Natural killer cell (primary cell): ENCODE measurements at regions of chr5 and their contacts with region 1.

Region 1: GRCh38 chr5:93607367-93608258 is 24.6 kb downstream of the NR2F1 start:
- DNase-seq: peak in 1 of 2 donors; percentile 73
- ATAC-seq: peak; percentile 75 to 80 (median 76)
- H3K4me3 ChIP-seq: no peak overlapping the region
- H3K4me3 Mint-ChIP-seq: no peak overlapping the region
- H3K27ac ChIP-seq: no peak overlapping the region
- H3K27ac Mint-ChIP-seq: no peak overlapping the region
- H3K4me1 ChIP-seq: peaks cover 7% of the 10 kb centered on the region
- H3K4me1 Mint-ChIP-seq: peaks cover 12 to 26% of the 10 kb centered on the region in 2 donors
- H3K27me3 ChIP-seq: peaks cover 88% of the 10 kb centered on the region
- H3K27me3 Mint-ChIP-seq: peaks cover 70 to 83% of the 10 kb centered on the region in 2 donors
- CTCF ChIP-seq: peak; percentile 43

Region 2: DNA sequence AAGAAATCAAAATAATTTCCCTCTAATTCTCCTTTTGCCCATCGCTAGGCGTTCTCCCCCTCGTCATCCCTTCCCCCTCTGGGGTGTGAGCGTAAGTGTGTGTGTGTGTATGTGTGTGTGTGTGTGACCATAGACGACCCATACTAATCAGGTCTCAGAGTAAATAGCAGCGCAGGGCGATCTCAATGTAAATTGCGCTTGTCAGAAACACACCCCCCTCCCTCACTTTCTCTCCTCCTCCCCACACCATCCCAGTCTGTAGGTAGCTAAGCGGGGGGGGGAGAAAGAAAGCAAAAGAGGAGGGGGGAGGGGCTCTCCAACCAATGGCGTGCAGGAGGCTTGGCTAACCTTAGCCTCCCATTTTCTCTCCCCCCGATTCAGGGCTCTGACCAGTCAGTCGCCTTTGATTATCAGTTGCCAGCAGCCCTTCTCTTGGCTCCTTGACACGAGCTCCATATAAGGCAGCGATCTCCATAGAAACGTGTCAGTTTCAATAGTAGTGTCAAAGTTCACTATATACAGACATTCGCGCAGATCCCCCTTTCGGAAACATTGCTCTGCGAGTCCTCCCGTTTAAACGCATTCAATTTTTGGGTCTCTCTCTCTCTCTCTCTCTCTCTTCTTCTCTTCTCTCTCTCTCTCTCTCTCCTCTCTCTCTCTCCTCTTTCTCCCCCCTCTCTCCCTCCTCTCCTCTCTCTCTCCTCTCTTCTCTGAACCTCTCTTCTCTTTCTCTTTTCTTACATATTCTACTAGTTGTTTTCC is 24.8 kb before region 1 on chr5 and contains the start of gene NR2F1:
- intact Hi-C with region 1: loop called (anchors 2 kb)
- DNase-seq: peak in 1 of 2 donors; percentile 46
- ATAC-seq: no peak
- H3K4me3 ChIP-seq: no peak within 1 kb of the TSS
- H3K4me3 Mint-ChIP-seq: no peak within 1 kb of the TSS
- H3K27ac ChIP-seq: no peak within 1 kb of the TSS
- H3K27ac Mint-ChIP-seq: no peak within 1 kb of the TSS
- H3K4me1 ChIP-seq: peaks cover 64% of the 10 kb centered on the region
- H3K4me1 Mint-ChIP-seq: peaks cover 35% of the 10 kb centered on the region in 2 donors
- H3K27me3 ChIP-seq: peaks cover 74% of the 10 kb centered on the region
- H3K27me3 Mint-ChIP-seq: peaks cover 37 to 42% of the 10 kb centered on the region in 2 donors
- CTCF ChIP-seq: no peak
- total RNA-seq, gene NR2F1: not detected

Region 3: GRCh38 chr5:93800988-93801811 is 193.6 kb after region 1 on chr5:
- intact Hi-C with region 1: loop called (anchors 1 kb)
- DNase-seq: peak in 1 of 2 donors; percentile 71
- ATAC-seq: peak in 2 of 3 donors; percentile 58 to 64
- H3K4me3 ChIP-seq: no peak overlapping the region
- H3K4me3 Mint-ChIP-seq: no peak overlapping the region
- H3K27ac ChIP-seq: no peak overlapping the region
- H3K27ac Mint-ChIP-seq: no peak overlapping the region
- H3K4me1 ChIP-seq: no peaks in the 10 kb centered on the region
- H3K4me1 Mint-ChIP-seq: peaks cover 4 to 5% of the 10 kb centered on the region in 2 donors
- H3K27me3 ChIP-seq: no peaks in the 10 kb centered on the region
- H3K27me3 Mint-ChIP-seq: no peaks in the 10 kb centered on the region
- CTCF ChIP-seq: peak; percentile 80

Region 4: GRCh38 chr5:93915142-93915553 is 307.5 kb after region 1 on chr5:
- intact Hi-C with region 1: loop called (anchors 10 kb)
- DNase-seq: peak in 1 of 2 donors; percentile 61
- ATAC-seq: peak in 2 of 3 donors; percentile 46 to 54
- H3K4me3 ChIP-seq: no peak overlapping the region
- H3K4me3 Mint-ChIP-seq: no peak overlapping the region
- H3K27ac ChIP-seq: no peak overlapping the region
- H3K27ac Mint-ChIP-seq: no peak overlapping the region
- H3K4me1 ChIP-seq: no peaks in the 10 kb centered on the region
- H3K4me1 Mint-ChIP-seq: no peaks in the 10 kb centered on the region
- H3K27me3 ChIP-seq: no peaks in the 10 kb centered on the region
- H3K27me3 Mint-ChIP-seq: no peaks in the 10 kb centered on the region
- CTCF ChIP-seq: peak; percentile 79